HCT116 (cell line): ENCODE measurements at regions of chr14 and their contacts with region 1.

Region 1: DNA sequence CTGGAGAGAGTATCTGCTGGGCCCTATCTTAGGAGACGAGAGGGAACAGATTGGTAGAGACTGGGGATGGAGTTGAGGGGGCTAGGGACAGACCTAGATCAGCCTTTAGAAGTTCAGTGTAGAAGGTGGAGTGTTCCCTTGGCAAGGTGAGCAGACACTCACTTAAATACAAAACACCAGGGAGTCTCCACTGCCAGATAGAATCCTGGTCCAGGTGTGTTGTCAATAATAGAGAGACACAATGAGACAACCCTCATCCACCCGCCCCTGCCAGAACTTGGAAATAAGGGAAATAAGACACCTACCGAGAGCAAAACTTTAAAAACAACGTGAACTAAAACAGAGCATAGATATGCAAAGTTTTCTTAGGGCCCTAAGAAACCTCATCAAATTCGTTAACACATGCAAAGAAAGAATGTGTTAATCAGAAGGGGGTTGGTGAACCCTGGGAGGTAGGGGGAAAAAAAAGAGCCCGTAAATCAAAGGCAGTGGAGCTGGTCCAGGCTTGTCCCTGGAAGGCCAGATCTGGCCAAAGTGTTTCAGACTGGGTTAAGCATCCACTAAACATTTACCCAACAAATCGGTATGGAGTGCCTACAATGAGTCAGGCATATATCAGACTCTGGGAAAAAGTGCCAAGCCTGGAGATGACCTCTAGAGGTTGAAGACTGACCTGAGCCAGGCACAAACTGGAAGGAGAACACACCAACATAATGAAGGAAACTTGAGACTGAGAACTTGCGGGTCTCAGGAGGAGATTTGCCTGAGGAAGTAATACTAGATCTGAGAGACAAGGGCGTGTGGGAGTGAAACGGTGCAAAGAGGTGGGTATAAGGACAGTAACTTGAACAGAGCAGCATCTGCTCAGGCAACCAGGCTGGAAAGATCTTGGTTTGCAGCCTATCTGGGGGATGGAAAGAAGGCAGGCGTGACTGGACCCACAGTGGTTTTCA is 37.0 kb upstream of the OTX2 start:
- DNase-seq: no peak
- ATAC-seq: no peak
- H3K4me3 ChIP-seq: no peak overlapping the region
- H3K27ac ChIP-seq: no peak overlapping the region
- H3K4me1 ChIP-seq: no peaks in the 10 kb centered on the region
- H3K27me3 ChIP-seq: peaks cover 33% of the 10 kb centered on the region; the same call in 1 of the 2 replicates
- CTCF ChIP-seq: no peak
- POLR2A ChIP-seq: no peak
- RAD21 ChIP-seq: no peak

Region 2: DNA sequence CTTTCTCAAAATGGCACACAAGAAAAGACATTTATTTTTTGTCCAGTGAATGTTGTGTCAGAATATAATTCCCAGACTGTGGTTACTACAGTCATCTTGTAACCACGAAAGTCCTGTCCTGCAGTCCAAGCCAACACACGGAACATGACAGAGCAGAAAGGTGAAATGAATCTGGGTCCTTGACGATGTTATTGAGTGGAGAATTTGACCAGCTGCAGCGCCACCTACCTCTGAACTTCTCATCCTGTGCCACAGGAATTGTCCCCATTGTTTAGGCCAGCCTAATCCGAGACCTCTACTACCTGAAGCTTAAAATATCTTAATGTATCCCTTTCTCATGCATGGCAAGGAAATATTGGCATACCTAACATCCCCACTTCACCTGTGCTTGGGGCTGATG is 27.1 kb after region 1 on chr14:
- CTCF ChIA-PET with region 1: no interaction called
- POLR2A ChIA-PET with region 1: no interaction called
- RAD21 ChIA-PET with region 1: interaction called in 1 of 2 experiments, 11 read pairs
- intact Hi-C with region 1: no loop called
- DNase-seq: peak; percentile 26
- ATAC-seq: peak; percentile 96
- H3K4me3 ChIP-seq: no peak overlapping the region
- H3K27ac ChIP-seq: no peak overlapping the region
- H3K4me1 ChIP-seq: no peaks in the 10 kb centered on the region; a peak in 1 of 4 replicates
- H3K27me3 ChIP-seq: peaks cover 9% of the 10 kb centered on the region; the same call in 1 of the 2 replicates
- CTCF ChIP-seq: peak; percentile 23 to 72 (median 64); a peak in 5 of 6 replicates
- POLR2A ChIP-seq: no peak
- RAD21 ChIP-seq: peak; percentile 49

Region 3: DNA sequence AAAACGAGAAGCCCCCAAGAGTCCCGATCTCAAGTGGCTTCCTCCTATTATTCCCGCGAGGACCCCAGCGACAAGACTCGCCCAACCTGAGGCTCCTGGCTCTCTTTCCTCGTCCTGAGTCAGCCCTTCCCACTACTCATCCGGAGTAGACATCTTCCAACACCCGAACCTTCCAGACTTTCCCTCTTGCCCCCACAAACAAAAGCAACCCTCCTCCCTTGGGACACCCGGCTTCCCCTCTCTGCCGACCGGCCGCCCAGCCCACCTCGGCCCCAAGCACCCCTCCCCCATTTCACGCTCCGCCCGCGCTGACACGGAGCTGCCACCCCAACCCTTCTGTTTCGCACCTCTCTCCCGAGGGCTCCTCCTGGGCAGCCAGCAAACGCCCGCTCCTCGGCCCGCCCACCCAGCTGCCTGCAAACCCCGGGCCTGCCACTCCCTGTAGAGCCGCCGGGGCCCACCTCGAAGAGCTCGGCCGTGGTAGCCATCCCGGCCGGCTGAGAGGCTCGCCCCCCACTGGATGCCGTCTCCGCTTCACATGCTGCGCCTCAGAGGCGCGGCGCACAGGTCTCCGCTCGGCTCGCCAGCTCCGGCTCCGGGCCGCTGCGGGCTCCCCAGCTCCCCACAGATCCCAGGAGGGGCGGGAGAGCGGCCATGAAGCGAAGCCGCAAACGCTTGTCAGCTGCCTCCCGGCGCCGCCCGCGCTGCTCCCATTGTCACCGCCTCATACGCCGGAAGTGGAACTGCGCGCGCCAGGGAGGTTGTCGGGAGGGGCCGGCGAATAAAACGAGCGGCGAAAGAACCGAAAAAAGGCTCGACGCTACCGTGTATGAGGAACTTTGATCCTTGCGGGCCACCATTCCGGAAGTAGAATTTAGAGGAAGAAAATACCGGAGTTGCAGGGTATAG is 421.2 kb after region 1 on chr14 and contains the starts of genes AP5M1 and EXOC5:
- CTCF ChIA-PET with region 1: no interaction called
- POLR2A ChIA-PET with region 1: no interaction called
- RAD21 ChIA-PET with region 1: no interaction called
- intact Hi-C with region 1: no loop called
- DNase-seq: peak; percentile 86
- ATAC-seq: peak; percentile 90
- H3K4me3 ChIP-seq: peak within 1 kb of the TSS; percentile 84 to 86
- H3K27ac ChIP-seq: peak within 1 kb of the TSS; percentile 86
- H3K4me1 ChIP-seq: peaks cover 12 to 13% of the 10 kb centered on the region in 2 experiments
- H3K27me3 ChIP-seq: no peaks in the 10 kb centered on the region
- CTCF ChIP-seq: 0 out of 6 replicates have a peak, but pooled peaks of 1 of the 3 experiments have one; percentile 1
- POLR2A ChIP-seq: peak; percentile 56
- RAD21 ChIP-seq: no peak
- total RNA-seq, gene AP5M1: 25.3 TPM
- total RNA-seq, gene EXOC5: 54.2 TPM